CD8-positive, alpha-beta memory T cell (primary cell): ENCODE measurements at regions of chr1 and their contacts with region 1.

Region 1: DNA sequence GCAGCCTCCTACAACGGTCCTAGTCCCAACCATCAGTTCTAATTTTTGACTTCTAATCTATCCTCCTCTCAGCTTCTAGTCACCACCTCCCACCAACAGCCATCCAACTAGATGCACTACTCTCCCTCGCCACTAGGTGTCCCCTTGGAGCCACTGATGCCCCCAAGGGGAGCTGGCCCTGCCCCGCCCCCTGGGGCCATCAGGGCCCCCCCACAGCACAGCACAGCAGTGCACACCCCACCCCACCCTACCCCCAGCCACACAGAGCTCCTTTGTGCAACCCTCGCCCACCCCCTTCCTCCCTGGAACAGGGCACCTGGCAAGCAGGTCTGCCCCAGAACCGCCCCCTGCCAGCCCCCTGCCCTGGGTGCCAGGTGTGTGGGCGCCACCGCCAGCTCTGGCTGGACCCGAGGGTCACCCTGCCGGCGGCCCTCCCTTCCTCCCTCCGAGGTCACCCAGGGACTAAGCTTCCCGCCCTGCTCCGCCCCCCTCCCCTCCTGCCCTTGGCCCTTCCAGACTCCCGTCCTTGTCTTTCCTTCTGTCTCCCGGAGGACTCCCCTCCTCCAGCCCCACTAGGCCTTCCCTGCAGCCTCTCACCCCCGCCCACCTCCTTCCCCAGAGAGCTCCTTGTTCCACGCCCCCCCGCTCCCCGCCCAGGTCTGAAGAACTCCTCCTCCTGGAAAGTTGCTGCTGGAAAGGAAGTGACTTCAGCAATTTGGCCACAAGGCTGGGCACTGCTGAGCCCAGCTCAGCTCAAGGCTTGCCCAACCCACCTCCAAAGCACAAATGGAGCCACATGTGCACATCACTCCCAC is 47.0 kb downstream of the AHDC1 start:
- DNase-seq: peak; percentile 58 to 82 (median 69)
- H3K4me3 ChIP-seq: peak overlapping the region; percentile 36
- H3K4me3 Mint-ChIP-seq: peak overlapping the region in 5 of 7 donors; percentile 1 to 42 (median 17)
- H3K27ac ChIP-seq: peak overlapping the region; percentile 25
- H3K27ac Mint-ChIP-seq: peak overlapping the region; percentile 12 to 82 (median 47)
- H3K4me1 ChIP-seq: peaks cover 26% of the 10 kb centered on the region
- H3K4me1 Mint-ChIP-seq: peaks cover 20 to 36% (median 20%) of the 10 kb centered on the region in 3 donors
- H3K27me3 ChIP-seq: no peaks in the 10 kb centered on the region
- H3K27me3 Mint-ChIP-seq: no peaks in the 10 kb centered on the region

Region 2: DNA sequence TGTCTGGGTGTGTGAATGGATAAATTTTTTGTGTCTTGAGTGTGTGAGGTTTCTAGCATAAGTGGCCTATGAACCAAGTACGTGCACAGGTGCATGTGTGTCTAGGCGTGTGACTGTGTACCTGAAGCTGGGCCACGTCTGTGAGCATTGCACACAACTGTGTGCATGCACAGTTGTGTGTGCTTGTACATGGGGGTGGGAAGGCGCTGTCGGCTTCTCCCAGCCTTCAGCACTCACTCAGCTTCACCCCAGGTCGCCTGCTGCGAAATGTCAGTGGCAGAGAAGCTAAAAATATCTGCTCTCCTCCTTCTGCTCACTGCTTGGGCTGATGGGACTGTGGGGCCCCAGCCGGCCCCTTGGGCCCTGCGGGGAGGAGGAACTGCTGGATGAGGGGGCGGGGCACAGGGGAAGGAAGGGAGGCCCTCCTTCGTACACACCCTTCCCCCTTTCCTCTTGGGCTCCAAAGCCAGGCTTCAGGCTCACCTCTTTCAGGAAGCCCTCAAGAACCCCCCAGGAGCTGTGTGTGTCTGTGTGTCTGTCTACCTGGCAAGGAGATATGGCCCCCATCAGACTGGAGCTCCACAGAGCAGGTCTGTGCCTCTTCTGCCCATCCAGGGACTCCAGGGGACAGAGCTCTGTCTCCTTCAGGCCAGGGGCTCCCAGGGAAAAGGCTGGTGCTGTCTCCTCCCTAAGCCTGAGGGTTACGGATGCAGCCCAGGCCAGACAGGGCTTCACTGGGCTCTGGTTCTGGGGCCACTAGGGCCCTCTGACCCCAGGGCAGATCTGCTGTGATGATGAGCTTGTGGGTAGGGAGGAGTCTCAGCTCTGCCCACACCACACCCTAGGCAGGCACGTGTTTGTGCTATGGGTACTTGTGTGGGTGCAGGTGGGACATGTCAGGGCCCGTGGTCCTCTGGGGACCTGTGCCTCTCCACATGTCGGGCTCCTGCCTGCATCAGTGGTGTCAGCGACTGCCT is 31.4 kb before region 1 on chr1:
- CTCF ChIA-PET with region 1: interaction called, 34 read pairs
- POLR2A ChIA-PET with region 1: no interaction called
- DNase-seq: peak in 3 of 5 donors; percentile 10 to 60 (median 30)
- H3K4me3 ChIP-seq: peak overlapping the region; percentile 35
- H3K4me3 Mint-ChIP-seq: peak overlapping the region; percentile 42 to 86 (median 74)
- H3K27ac ChIP-seq: peak overlapping the region; percentile 63
- H3K27ac Mint-ChIP-seq: peak overlapping the region; percentile 51 to 95 (median 88)
- H3K4me1 ChIP-seq: peaks cover 79% of the 10 kb centered on the region
- H3K4me1 Mint-ChIP-seq: peaks cover 67 to 79% (median 70%) of the 10 kb centered on the region in 3 donors
- H3K27me3 ChIP-seq: no peaks in the 10 kb centered on the region
- H3K27me3 Mint-ChIP-seq: no peaks in the 10 kb centered on the region

Region 3: GRCh38 chr1:27545271-27545670 is 11.7 kb before region 1 on chr1:
- CTCF ChIA-PET with region 1: interaction called, 22 read pairs
- POLR2A ChIA-PET with region 1: no interaction called
- DNase-seq: no peak
- H3K4me3 ChIP-seq: no peak overlapping the region
- H3K4me3 Mint-ChIP-seq: no peak overlapping the region
- H3K27ac ChIP-seq: peak overlapping the region; percentile 54
- H3K27ac Mint-ChIP-seq: no peak overlapping the region
- H3K4me1 ChIP-seq: peaks cover 7% of the 10 kb centered on the region
- H3K4me1 Mint-ChIP-seq: peaks cover 0 to 8% (median 0%) of the 10 kb centered on the region in 3 donors
- H3K27me3 ChIP-seq: no peaks in the 10 kb centered on the region
- H3K27me3 Mint-ChIP-seq: peaks cover 0 to 2% of the 10 kb centered on the region in 2 donors

Region 4: GRCh38 chr1:27568300-27569087 is 11.5 kb after region 1 on chr1:
- CTCF ChIA-PET with region 1: interaction called, 36 read pairs
- POLR2A ChIA-PET with region 1: no interaction called
- DNase-seq: peak; percentile 91 to 94 (median 92)
- H3K4me3 ChIP-seq: peak overlapping the region; percentile 30
- H3K4me3 Mint-ChIP-seq: peak overlapping the region; percentile 8 to 83 (median 78)
- H3K27ac ChIP-seq: no peak overlapping the region
- H3K27ac Mint-ChIP-seq: peak overlapping the region; percentile 57 to 97 (median 92)
- H3K4me1 ChIP-seq: peaks cover 38% of the 10 kb centered on the region
- H3K4me1 Mint-ChIP-seq: peaks cover 25 to 33% (median 26%) of the 10 kb centered on the region in 3 donors
- H3K27me3 ChIP-seq: no peaks in the 10 kb centered on the region
- H3K27me3 Mint-ChIP-seq: no peaks in the 10 kb centered on the region